OCI-LY7 (cell line): ENCODE measurements at regions of chr5 and their contacts with region 1.

Region 1: GRCh38 chr5:104178829-104179456 is 616.4 kb upstream of the NUDT12 start:
- DNase-seq: peak; percentile 57
- H3K4me3 ChIP-seq: no peak overlapping the region
- H3K27ac ChIP-seq: no peak overlapping the region
- H3K4me1 ChIP-seq: no peaks in the 10 kb centered on the region
- CTCF ChIP-seq: peak; percentile 77

Region 2: GRCh38 chr5:103582364-103582763 is 596.6 kb before region 1 on chr5:
- CTCF ChIA-PET with region 1: no interaction called
- POLR2A ChIA-PET with region 1: no interaction called
- intact Hi-C with region 1: loop called (anchors 5 kb)
- DNase-seq: peak; percentile 22
- H3K4me3 ChIP-seq: no peak overlapping the region
- H3K27ac ChIP-seq: no peak overlapping the region
- H3K4me1 ChIP-seq: no peaks in the 10 kb centered on the region
- CTCF ChIP-seq: peak; percentile 72

Region 3: GRCh38 chr5:103808464-103809106 is 370.4 kb before region 1 on chr5:
- CTCF ChIA-PET with region 1: no interaction called
- POLR2A ChIA-PET with region 1: no interaction called
- intact Hi-C with region 1: loop called (anchors 10 kb)
- DNase-seq: peak; percentile 29
- H3K4me3 ChIP-seq: no peak overlapping the region
- H3K27ac ChIP-seq: no peak overlapping the region
- H3K4me1 ChIP-seq: no peaks in the 10 kb centered on the region
- CTCF ChIP-seq: peak; percentile 77

Region 4: GRCh38 chr5:103829585-103829984 is 349.4 kb before region 1 on chr5:
- CTCF ChIA-PET with region 1: no interaction called
- POLR2A ChIA-PET with region 1: no interaction called
- intact Hi-C with region 1: loop called (anchors 5 kb)
- DNase-seq: no peak
- H3K4me3 ChIP-seq: no peak overlapping the region
- H3K27ac ChIP-seq: no peak overlapping the region
- H3K4me1 ChIP-seq: no peaks in the 10 kb centered on the region
- CTCF ChIP-seq: peak; percentile 79